Caco-2 (cell line): ENCODE measurements at regions of chr11 and their contacts with region 1.

Region 1: GRCh38 chr11:70176940-70177689 is 26.0 kb upstream of the FADD start:
- DNase-seq: peak; percentile 64 to 85
- H3K4me3 ChIP-seq: no peak overlapping the region
- H3K4me3 Mint-ChIP-seq: no peak overlapping the region
- H3K27ac Mint-ChIP-seq: no peak overlapping the region
- H3K4me1 ChIP-seq: peaks cover 8% of the 10 kb centered on the region
- H3K4me1 Mint-ChIP-seq: peaks cover 6% of the 10 kb centered on the region
- H3K27me3 ChIP-seq: no peaks in the 10 kb centered on the region
- H3K27me3 Mint-ChIP-seq: no peaks in the 10 kb centered on the region
- CTCF ChIP-seq: peak; percentile 69 to 80

Region 2: GRCh38 chr11:70153133-70153727 is 23.9 kb before region 1 on chr11:
- CTCF ChIA-PET with region 1: interaction called, 12 read pairs
- POLR2A ChIA-PET with region 1: no interaction called
- intact Hi-C with region 1: no loop called
- DNase-seq: no peak
- H3K4me3 ChIP-seq: no peak overlapping the region
- H3K4me3 Mint-ChIP-seq: no peak overlapping the region
- H3K27ac Mint-ChIP-seq: no peak overlapping the region
- H3K4me1 ChIP-seq: no peaks in the 10 kb centered on the region
- H3K4me1 Mint-ChIP-seq: no peaks in the 10 kb centered on the region
- H3K27me3 ChIP-seq: no peaks in the 10 kb centered on the region; the same call in 1 of the 2 replicates
- H3K27me3 Mint-ChIP-seq: no peaks in the 10 kb centered on the region
- CTCF ChIP-seq: no peak

Region 3: DNA sequence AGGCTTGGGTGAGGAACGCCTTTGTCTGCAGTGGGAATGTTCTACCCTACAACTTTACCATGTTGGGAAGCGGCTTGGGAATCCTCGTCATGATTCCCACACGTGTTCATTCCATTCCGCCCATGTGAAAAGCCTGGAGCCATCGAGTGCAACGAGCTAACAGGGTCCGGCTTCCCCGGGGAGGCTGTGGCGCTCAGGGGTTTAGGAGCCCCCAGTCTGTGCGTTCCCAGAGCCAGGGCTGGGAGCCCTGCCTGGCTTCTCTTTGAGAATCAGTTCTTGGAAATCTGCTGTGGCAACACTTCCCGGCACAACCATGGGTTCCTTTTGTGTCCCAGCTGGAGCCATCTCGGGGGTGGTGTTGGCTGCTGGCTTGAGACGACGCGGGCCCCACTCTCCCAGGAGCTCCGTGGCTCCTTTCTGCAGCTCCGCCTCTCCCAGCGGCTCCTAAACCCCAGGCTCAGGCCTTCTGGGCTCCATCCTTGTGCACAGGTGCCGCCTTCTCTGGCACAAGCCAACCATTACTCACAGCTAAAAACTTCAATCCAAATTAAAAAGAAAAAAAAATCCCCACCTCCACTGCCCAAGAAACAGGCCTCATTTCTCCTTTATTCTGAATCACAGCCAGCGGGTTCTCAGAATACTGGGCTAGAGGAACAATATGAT is 74.7 kb after region 1 on chr11:
- CTCF ChIA-PET with region 1: no interaction called
- POLR2A ChIA-PET with region 1: no interaction called
- intact Hi-C with region 1: no loop called
- DNase-seq: no peak
- H3K4me3 ChIP-seq: no peak overlapping the region
- H3K4me3 Mint-ChIP-seq: no peak overlapping the region
- H3K27ac Mint-ChIP-seq: no peak overlapping the region
- H3K4me1 ChIP-seq: no peaks in the 10 kb centered on the region
- H3K4me1 Mint-ChIP-seq: peaks cover 26% of the 10 kb centered on the region
- H3K27me3 ChIP-seq: no peaks in the 10 kb centered on the region
- H3K27me3 Mint-ChIP-seq: no peaks in the 10 kb centered on the region
- CTCF ChIP-seq: no peak